ENCODE measurements at regions of chr7 and their contacts with region 1.

Region 1: DNA sequence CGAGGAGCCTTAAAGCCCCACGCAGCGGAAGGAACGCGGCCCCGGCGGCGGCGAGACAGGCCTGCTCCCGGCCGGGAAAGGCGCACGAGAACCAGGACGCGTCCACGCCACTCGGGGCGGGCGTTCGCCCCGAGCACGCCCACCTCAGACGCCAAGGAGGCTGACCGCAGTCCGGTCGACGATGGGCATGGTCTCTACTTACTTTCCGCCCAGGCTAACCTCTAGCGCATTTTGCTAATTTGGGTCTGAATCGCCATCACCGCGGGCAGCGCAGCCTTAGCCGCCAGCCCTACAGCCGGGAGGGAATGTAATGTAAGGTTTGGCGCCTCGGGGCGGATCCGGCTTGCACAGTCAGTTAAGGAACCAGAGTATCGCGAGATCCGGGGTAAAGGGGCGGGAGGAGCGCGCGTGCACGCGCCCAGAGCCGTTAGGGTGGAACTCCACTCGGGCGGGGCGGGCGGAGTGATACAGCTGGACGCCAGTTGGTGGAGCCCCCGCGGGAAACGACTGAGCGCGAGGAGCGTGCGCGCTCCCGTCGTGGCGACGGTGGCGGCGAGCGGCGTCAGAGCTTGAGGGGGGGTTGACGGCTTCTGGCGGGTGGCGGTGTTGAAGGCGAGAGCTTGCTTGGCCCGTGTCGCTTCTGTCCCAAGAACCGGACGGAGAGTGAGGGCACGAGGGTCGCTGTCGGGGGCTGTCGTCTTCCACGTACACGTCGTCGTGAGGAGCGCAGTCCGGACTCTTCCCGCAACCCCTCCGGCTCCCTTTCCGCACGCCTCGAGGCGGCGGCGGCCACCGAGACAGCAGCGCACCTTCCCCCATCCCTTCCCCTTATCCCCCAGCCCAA is at the start of gene LUC7L2:
- DNase-seq: peak; percentile 99
- H3K4me3 ChIP-seq: peak within 1 kb of the TSS; percentile 82 to 97 (median 95)
- H3K27ac ChIP-seq: peak within 1 kb of the TSS; percentile 98
- H3K4me1 ChIP-seq: peaks cover 21% of the 10 kb centered on the region
- H3K27me3 ChIP-seq: no peaks in the 10 kb centered on the region
- CTCF ChIP-seq: no peak
- POLR2A ChIP-seq: peak; percentile 98
- total RNA-seq, gene LUC7L2: 85.8 and 87.6 TPM in 2 replicates

Region 2: DNA sequence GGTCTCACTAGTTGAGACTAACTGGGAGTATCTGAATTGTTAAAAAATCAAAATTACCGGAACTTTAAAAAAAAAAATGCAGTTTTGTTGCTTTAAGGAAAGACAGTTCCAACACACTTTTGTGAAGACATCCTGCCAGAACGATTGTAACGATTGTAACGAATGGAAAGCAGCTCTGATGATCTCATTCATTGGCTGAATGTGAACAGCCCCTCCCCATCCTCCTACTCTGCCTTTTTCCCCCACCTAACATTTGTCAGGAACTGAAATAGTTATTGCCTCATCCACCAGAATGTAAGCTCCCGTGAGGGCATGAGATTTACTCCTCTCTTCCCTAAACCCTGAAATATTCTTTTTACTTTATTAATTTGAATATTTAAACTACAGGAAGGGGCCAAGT is 300.6 kb before region 1 on chr7:
- CTCF ChIA-PET with region 1: no interaction called
- POLR2A ChIA-PET with region 1: no interaction called
- dilution Hi-C with region 1: no loop called
- intact Hi-C with region 1: no loop called
- DNase-seq: peak; percentile 81
- H3K4me3 ChIP-seq: no peak overlapping the region
- H3K27ac ChIP-seq: peak overlapping the region; percentile 67
- H3K4me1 ChIP-seq: peaks cover 23% of the 10 kb centered on the region
- H3K27me3 ChIP-seq: no peaks in the 10 kb centered on the region
- CTCF ChIP-seq: no peak
- POLR2A ChIP-seq: no peak

Region 3: GRCh38 chr7:139152149-139152548 is 207.4 kb before region 1 on chr7:
- CTCF ChIA-PET with region 1: no interaction called
- POLR2A ChIA-PET with region 1: no interaction called
- dilution Hi-C with region 1: no loop called
- intact Hi-C with region 1: no loop called
- DNase-seq: no peak
- H3K4me3 ChIP-seq: no peak overlapping the region
- H3K27ac ChIP-seq: no peak overlapping the region
- H3K4me1 ChIP-seq: peaks cover 11% of the 10 kb centered on the region
- H3K27me3 ChIP-seq: no peaks in the 10 kb centered on the region
- CTCF ChIP-seq: no peak
- POLR2A ChIP-seq: no peak

Region 4: GRCh38 chr7:140049339-140050024 is 689.9 kb after region 1 on chr7:
- CTCF ChIA-PET with region 1: no interaction called
- POLR2A ChIA-PET with region 1: no interaction called
- dilution Hi-C with region 1: no loop called
- intact Hi-C with region 1: loop called (anchors 10 kb)
- DNase-seq: peak; percentile 88
- H3K4me3 ChIP-seq: no peak overlapping the region
- H3K27ac ChIP-seq: peak overlapping the region; percentile 72
- H3K4me1 ChIP-seq: peaks cover 24% of the 10 kb centered on the region
- H3K27me3 ChIP-seq: no peaks in the 10 kb centered on the region
- CTCF ChIP-seq: no peak
- POLR2A ChIP-seq: no peak

Measured in endothelial cell of umbilical vein (primary cell).